ENCODE measurements at regions of chr12 and their contacts with region 1.

Region 1: GRCh38 chr12:57238854-57239554 is 9.5 kb downstream of the SHMT2 start:
- DNase-seq: peak; percentile 89
- ATAC-seq: peak; percentile 51
- H3K4me3 ChIP-seq: peak overlapping the region; percentile 70
- H3K27ac ChIP-seq: no peak overlapping the region
- H3K4me1 ChIP-seq: peaks cover 33% of the 10 kb centered on the region
- H3K27me3 ChIP-seq: peaks cover 16% of the 10 kb centered on the region
- CTCF ChIP-seq: peak; percentile 100

Region 2: DNA sequence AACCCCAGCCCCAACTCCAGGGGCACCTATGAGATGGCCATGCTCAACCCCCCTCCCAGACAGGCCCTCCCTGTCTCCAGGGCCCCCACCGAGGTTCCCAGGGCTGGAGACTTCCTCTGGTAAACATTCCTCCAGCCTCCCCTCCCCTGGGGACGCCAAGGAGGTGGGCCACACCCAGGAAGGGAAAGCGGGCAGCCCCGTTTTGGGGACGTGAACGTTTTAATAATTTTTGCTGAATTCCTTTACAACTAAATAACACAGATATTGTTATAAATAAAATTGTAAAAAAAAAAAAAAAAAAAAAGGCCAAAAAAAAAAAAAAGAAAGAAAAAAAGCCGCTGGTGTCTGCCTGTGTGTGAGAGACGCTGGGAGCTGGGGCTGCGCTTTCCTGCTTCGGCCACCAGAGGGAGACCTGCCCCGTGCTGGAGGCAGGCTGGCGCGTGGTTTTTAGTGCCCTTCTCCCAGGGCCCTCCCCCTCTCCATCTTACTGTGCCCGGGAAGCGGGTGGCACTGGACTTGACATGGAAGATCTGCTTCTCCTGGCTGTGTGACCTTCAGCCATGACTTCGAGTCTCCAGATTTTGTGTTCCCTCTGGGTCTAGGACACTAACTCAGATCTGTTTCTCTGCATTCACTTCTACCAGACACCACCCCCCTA is 25.8 kb before region 1 on chr12:
- CTCF ChIA-PET with region 1: interaction called, 24 read pairs
- POLR2A ChIA-PET with region 1: no interaction called
- intact Hi-C with region 1: loop called (anchors 1 kb)
- DNase-seq: peak; percentile 89
- ATAC-seq: peak; percentile 48
- H3K4me3 ChIP-seq: no peak overlapping the region
- H3K27ac ChIP-seq: no peak overlapping the region
- H3K4me1 ChIP-seq: peaks cover 30% of the 10 kb centered on the region
- H3K27me3 ChIP-seq: peaks cover 19% of the 10 kb centered on the region
- CTCF ChIP-seq: peak; percentile 81

Region 3: DNA sequence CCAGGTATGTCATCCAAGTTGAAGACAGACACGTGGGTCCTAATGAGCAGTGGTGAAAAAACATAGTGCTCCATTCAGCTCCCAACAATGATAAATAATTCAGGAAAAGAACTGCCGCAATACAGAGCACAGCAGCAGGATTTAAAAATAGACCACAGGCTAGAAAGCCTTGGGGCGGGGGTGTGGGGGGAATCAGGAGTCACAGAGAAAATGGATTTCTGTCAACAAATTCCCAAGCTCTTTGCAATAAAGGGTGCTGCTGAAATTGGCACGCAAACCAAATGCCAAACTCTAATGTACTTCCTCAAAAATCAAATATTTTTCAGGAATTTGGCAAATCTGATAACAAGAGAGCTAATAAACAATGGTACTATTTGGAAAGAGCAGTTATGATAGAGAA is 133.2 kb after region 1 on chr12:
- CTCF ChIA-PET with region 1: no interaction called
- POLR2A ChIA-PET with region 1: no interaction called
- intact Hi-C with region 1: no loop called
- DNase-seq: no peak
- ATAC-seq: no peak
- H3K4me3 ChIP-seq: no peak overlapping the region
- H3K27ac ChIP-seq: no peak overlapping the region
- H3K4me1 ChIP-seq: no peaks in the 10 kb centered on the region
- H3K27me3 ChIP-seq: no peaks in the 10 kb centered on the region
- CTCF ChIP-seq: no peak